ENCODE measurements at regions of chr7 and their contacts with region 1.

Region 1: GRCh38 chr7:66114793-66115649 is at the start of gene CRCP:
- DNase-seq: peak; percentile 91
- ATAC-seq: peak; percentile 89
- H3K4me3 ChIP-seq: peak within 1 kb of the TSS; percentile 71 to 99 (median 88)
- H3K4me3 Mint-ChIP-seq: peak within 1 kb of the TSS; percentile 99
- H3K27ac ChIP-seq: peak within 1 kb of the TSS; percentile 92 to 98
- H3K27ac Mint-ChIP-seq: peak within 1 kb of the TSS; percentile 99
- H3K4me1 ChIP-seq: peaks cover 15 to 23% of the 10 kb centered on the region in 2 donors
- H3K4me1 Mint-ChIP-seq: peaks cover 43% of the 10 kb centered on the region
- H3K27me3 ChIP-seq: no peaks in the 10 kb centered on the region
- H3K27me3 Mint-ChIP-seq: no peaks in the 10 kb centered on the region
- CTCF ChIP-seq: peak; percentile 15
- total RNA-seq, gene CRCP: 37.0 and 39.6 TPM in 2 replicates

Region 2: GRCh38 chr7:65750511-65751344 is 364.3 kb before region 1 on chr7:
- CTCF ChIA-PET with region 1: no interaction called
- POLR2A ChIA-PET with region 1: no interaction called
- intact Hi-C with region 1: loop called (anchors 5 kb)
- DNase-seq: peak; percentile 89
- ATAC-seq: peak; percentile 99
- H3K4me3 ChIP-seq: peak overlapping the region; percentile 43 to 88 (median 75)
- H3K4me3 Mint-ChIP-seq: peak overlapping the region; percentile 97
- H3K27ac ChIP-seq: peak overlapping the region; percentile 41 to 69
- H3K27ac Mint-ChIP-seq: peak overlapping the region; percentile 86
- H3K4me1 ChIP-seq: peaks cover 3 to 15% of the 10 kb centered on the region in 2 donors
- H3K4me1 Mint-ChIP-seq: peaks cover 16% of the 10 kb centered on the region
- H3K27me3 ChIP-seq: no peaks in the 10 kb centered on the region
- H3K27me3 Mint-ChIP-seq: no peaks in the 10 kb centered on the region
- CTCF ChIP-seq: no peak

Region 3: DNA sequence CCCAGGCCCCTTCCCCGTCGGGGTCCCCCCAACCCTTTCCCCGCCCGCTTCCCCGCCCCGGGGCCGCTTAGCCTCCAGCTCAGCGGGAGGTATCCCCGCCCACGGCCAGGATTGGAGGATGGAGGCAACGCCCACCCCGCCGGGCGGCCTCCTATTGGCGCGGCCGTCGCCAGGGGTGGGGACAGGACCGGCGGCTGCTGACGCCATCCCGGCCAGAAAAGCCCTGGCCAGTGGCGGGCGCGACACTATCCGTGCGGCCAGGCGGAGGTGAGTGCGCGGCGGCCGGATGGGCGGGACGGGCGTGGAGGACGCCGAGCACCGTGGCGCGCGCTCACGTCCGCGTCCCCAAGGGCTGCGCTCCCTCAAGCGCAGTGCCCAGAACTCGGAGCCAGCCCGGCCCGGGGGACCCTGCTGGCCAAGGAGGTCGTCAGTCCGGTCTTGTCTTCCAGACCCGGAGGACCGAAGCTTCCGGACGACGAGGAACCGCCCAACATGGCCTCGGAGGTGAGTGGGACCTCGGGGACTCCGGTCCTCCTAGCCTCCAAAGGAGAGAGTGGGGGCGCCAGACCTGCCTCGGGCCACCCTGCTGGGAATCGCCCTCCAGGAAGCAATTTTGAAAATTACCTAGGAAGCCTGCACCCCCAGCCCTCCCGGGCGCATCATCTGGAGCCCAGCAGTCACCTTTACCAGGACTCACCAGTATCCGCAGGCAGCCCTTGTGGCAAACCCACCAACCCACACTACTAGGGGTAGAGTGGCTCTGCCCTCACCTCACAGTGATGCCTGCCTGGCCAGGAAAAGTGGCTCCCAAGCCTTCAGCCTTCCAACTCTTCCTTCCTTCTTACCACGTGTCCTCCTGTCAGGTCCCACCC is 39.2 kb before region 1 on chr7 and contains the start of gene ASL:
- CTCF ChIA-PET with region 1: interaction called, 4 read pairs
- POLR2A ChIA-PET with region 1: interaction called, 6 read pairs
- intact Hi-C with region 1: loop called (anchors 1 kb)
- DNase-seq: peak; percentile 90
- ATAC-seq: peak; percentile 98
- H3K4me3 ChIP-seq: peak within 1 kb of the TSS; percentile 54 to 93 (median 77)
- H3K4me3 Mint-ChIP-seq: peak within 1 kb of the TSS; percentile 90
- H3K27ac ChIP-seq: peak within 1 kb of the TSS; percentile 55 to 82
- H3K27ac Mint-ChIP-seq: peak within 1 kb of the TSS; percentile 76
- H3K4me1 ChIP-seq: peaks cover 6 to 18% of the 10 kb centered on the region in 2 donors
- H3K4me1 Mint-ChIP-seq: peaks cover 17% of the 10 kb centered on the region
- H3K27me3 ChIP-seq: no peaks in the 10 kb centered on the region
- H3K27me3 Mint-ChIP-seq: no peaks in the 10 kb centered on the region
- CTCF ChIP-seq: no peak
- total RNA-seq, gene ASL: 48.7 and 48.8 TPM in 2 replicates

Region 4: DNA sequence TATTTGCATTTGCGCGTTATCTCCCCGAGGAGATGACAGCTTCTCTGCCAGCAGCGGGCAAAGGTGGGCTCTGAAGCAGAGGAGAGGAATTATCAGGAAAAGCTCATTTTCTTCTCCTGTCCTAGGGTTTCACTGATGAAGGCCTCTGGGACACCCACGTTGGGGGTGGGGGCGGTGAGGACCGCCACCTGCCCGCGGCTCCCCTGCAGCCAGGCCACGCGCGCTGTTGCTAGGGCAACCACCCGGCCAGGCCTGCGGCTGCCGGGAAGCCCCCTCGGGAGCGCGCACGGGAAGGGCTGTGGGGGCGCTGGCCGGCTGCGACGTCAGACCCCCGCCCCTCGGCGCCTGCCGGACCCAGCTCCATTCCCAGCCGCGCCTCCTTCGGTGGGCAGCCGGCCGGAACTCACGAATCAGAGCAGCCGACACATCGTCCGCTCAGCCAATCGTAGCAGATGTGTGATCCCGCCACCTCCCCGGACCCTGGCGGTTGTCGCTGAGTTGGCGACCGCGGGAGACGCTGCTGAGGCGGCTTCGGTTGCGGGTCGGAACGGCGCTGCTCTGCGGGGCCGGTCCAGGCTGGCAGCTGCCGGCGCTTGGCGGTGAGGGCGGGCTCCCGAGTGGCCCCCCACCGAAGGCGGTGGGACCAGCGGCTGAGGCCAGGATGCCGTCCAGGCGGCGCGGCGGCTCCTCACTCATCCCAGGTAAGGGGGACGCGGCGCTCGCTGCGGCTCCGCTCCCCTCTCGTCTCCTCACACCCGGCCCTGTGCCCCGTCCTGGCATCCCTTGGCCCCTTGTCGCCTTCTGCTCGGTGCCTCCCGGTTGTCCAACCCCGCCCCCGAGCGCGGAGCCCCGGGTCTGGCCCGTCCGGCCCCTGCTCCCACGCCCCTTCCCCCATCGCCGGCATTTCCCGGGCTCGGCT is 90.1 kb after region 1 on chr7 and contains the start of gene TPST1:
- CTCF ChIA-PET with region 1: interaction called, 5 read pairs
- POLR2A ChIA-PET with region 1: no interaction called
- intact Hi-C with region 1: loop called (anchors 1 kb)
- DNase-seq: peak; percentile 97
- ATAC-seq: peak; percentile 95
- H3K4me3 ChIP-seq: peak within 1 kb of the TSS; percentile 66 to 87 (median 75)
- H3K4me3 Mint-ChIP-seq: peak within 1 kb of the TSS; percentile 96
- H3K27ac ChIP-seq: peak within 1 kb of the TSS; percentile 68 to 84
- H3K27ac Mint-ChIP-seq: peak within 1 kb of the TSS; percentile 92
- H3K4me1 ChIP-seq: peaks cover 40 to 41% of the 10 kb centered on the region in 2 donors
- H3K4me1 Mint-ChIP-seq: peaks cover 41% of the 10 kb centered on the region
- H3K27me3 ChIP-seq: peaks cover 0 to 4% (median 1%) of the 10 kb centered on the region in 4 experiments
- H3K27me3 Mint-ChIP-seq: no peaks in the 10 kb centered on the region
- CTCF ChIP-seq: peak; percentile 75
- total RNA-seq, gene TPST1: 11.3 and 13.0 TPM in 2 replicates

Region 5: GRCh38 chr7:67302113-67303039 is 1187.4 kb after region 1 on chr7:
- CTCF ChIA-PET with region 1: no interaction called
- POLR2A ChIA-PET with region 1: no interaction called
- intact Hi-C with region 1: loop called (anchors 5 kb)
- DNase-seq: peak; percentile 99
- ATAC-seq: peak; percentile 87
- H3K4me3 ChIP-seq: peak overlapping the region; percentile 54 to 96 (median 76)
- H3K4me3 Mint-ChIP-seq: peak overlapping the region; percentile 92
- H3K27ac ChIP-seq: peak overlapping the region; percentile 86 to 89
- H3K27ac Mint-ChIP-seq: peak overlapping the region; percentile 93
- H3K4me1 ChIP-seq: peaks cover 2 to 11% of the 10 kb centered on the region in 2 donors
- H3K4me1 Mint-ChIP-seq: peaks cover 33% of the 10 kb centered on the region
- H3K27me3 ChIP-seq: no peaks in the 10 kb centered on the region
- H3K27me3 Mint-ChIP-seq: no peaks in the 10 kb centered on the region
- CTCF ChIP-seq: peak; percentile 27

Measured in B cell (primary cell).